GM18951 (cell line): ENCODE measurements at regions of chr17 and their contacts with region 1.

Region 1: DNA sequence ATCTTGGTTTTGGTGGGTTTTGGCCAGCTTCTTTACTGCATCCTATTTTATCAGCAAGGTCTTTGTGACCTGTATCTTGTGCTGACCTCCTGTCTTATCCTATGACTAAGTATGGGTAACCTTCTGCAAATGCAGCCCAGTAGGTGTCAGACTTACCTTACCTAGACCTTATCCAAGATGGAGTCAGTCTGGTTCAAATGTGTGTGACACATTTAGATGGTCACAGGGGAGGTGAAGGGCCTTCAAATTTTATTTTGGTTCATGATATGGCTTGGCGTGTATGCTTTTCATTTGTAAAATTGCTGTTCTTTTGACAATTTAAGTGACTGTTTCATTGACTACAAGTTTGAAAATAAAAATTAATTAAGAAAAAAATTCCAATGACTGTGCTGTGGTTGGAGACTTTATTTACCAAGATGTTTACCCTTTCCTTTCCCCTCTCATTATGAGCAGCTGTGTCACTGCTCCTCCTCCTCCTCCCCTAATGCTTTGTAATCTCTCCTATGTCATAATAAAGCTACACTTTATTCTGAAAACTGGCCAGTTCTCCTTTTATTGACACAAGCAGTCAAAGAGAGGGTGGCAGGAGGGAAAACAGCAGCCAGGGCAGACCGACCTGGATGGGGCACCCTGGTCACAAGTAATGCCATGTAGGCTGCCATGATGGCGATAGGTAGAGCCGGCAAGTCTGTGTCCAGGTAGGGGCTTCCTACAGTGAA is 49.4 kb downstream of the TNFRSF13B start:
- POLR2A ChIP-seq: no peak

Region 2: GRCh38 chr17:16980813-16981731 is 58.5 kb after region 1 on chr17:
- in situ Hi-C with region 1: loop called (anchors 5 kb)
- POLR2A ChIP-seq: no peak

Region 3: GRCh38 chr17:17088526-17089525 is 166.3 kb after region 1 on chr17:
- in situ Hi-C with region 1: no loop called
- POLR2A ChIP-seq: no peak

Region 4: DNA sequence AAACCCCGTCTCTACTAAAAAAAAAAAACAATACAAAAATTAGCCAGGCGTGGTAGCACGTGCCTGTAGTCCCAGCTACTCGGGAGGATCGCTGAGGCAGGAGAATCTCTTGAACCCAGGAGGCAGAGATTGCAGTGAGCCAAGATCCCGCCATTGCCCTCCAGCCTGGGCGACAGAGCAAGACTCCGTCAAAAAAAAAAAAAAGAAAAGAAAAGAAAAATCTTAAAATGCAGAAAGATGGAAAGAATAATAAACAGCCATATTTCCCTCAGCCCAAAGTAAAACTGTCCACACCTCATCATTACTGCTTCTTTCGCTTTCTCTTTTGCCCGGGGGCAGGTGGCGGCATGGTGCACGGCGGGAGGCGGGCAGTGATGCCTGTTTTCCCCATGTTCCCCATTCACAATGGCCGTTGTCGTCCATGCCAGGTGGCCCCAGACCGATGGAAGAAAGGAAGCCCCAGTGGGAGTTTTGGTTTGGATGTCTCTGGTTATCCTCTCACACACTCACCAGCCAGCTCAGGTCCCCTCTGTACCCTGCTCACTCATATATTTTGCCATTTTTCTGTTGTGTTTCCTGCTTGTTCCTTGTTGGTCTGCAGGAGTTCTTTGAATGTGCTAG is 706.0 kb after region 1 on chr17:
- in situ Hi-C with region 1: no loop called
- POLR2A ChIP-seq: peak; percentile 32